ENCODE measurements at regions of chr13 and their contacts with region 1.

Region 1: GRCh38 chr13:101115762-101116171 is 300.5 kb downstream of the NALCN start:
- DNase-seq: no peak
- H3K4me3 ChIP-seq: no peak overlapping the region
- H3K27ac ChIP-seq: no peak overlapping the region
- H3K4me1 ChIP-seq: no peaks in the 10 kb centered on the region
- H3K27me3 ChIP-seq: no peaks in the 10 kb centered on the region
- CTCF ChIP-seq: no peak

Region 2: DNA sequence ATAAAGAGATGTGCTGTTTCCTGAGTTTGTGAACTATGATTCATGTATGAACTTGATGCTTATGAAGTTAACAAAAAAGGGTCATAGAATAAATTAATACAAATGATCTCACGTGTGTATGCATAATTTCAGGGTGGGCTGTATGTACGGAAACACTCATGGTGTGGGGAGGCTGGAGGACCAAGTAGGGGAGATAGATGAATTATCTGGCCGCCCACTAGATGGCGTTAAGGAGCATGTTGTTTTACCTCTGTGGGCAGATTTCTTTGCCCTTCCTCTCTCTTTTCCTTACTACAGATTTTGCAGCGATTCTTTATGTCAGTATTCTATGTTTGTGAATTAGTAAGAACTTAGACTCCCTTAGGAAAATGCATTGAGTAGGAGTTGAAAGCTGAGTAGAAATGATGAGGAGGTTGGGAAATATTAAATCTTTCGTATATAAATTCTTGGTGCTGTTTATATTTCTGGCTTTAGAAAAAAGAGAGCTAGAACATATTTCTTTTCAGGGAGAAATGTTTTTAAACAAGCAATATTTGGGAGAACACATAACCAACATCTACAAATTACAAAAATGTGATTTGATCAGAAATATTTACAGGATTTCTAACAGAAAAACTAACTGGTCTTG is 393.8 kb before region 1 on chr13:
- intact Hi-C with region 1: loop called (anchors 10 kb)
- DNase-seq: peak; percentile 44
- H3K4me3 ChIP-seq: no peak overlapping the region
- H3K27ac ChIP-seq: no peak overlapping the region
- H3K4me1 ChIP-seq: no peaks in the 10 kb centered on the region
- H3K27me3 ChIP-seq: no peaks in the 10 kb centered on the region
- CTCF ChIP-seq: peak; percentile 57

Region 3: DNA sequence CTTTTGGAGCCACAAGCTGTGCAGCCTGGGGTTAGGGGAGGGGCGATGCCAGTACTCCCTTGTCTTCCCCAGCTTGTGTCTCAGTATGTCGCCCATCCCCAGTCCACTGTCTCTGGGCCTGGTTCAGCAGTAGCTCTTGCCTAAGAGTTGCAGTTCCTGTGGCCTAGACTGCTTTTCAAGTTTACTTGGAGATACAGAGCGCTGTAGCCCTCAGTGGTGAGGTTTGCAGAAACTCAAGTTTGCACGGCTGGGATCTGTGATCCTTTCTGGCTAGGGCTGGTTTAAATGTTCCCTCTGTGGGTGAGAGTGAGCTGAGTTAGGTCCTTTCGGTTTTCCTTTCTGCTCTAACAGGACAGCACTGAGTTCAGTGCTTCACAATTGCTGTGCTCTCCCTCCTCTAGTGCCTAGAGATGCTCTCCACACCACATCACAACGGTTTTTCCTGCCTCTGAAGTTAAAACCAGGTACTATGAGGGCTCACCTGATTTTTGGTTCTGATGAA is 80.6 kb before region 1 on chr13:
- intact Hi-C with region 1: no loop called
- DNase-seq: no peak
- H3K4me3 ChIP-seq: no peak overlapping the region
- H3K27ac ChIP-seq: no peak overlapping the region
- H3K4me1 ChIP-seq: no peaks in the 10 kb centered on the region
- H3K27me3 ChIP-seq: no peaks in the 10 kb centered on the region
- CTCF ChIP-seq: no peak

Measured in colonic mucosa (tissue), 4 donors.